PC-9 (cell line): ENCODE measurements at regions of chr6 and their contacts with region 1.

Region 1: GRCh38 chr6:137218917-137219663 is at the start of gene IFNGR1:
- DNase-seq: peak; percentile 95 to 96
- H3K4me3 ChIP-seq: peak within 1 kb of the TSS; percentile 88
- H3K27ac ChIP-seq: peak within 1 kb of the TSS; percentile 90
- H3K4me1 ChIP-seq: peaks cover 55% of the 10 kb centered on the region
- H3K27me3 ChIP-seq: no peaks in the 10 kb centered on the region
- CTCF ChIP-seq: no peak
- total RNA-seq, gene IFNGR1: 17.9 and 19.5 TPM in 2 replicates

Region 2: GRCh38 chr6:137261393-137262160 is 42.5 kb after region 1 on chr6:
- CTCF ChIA-PET with region 1: no interaction called
- POLR2A ChIA-PET with region 1: no interaction called
- intact Hi-C with region 1: loop called (anchors 1 kb)
- DNase-seq: peak in 1 of 2 experiments; percentile 96
- H3K4me3 ChIP-seq: peak overlapping the region; percentile 28
- H3K27ac ChIP-seq: peak overlapping the region; percentile 68
- H3K4me1 ChIP-seq: peaks cover 20% of the 10 kb centered on the region
- H3K27me3 ChIP-seq: peaks cover 24% of the 10 kb centered on the region
- CTCF ChIP-seq: no peak

Region 3: DNA sequence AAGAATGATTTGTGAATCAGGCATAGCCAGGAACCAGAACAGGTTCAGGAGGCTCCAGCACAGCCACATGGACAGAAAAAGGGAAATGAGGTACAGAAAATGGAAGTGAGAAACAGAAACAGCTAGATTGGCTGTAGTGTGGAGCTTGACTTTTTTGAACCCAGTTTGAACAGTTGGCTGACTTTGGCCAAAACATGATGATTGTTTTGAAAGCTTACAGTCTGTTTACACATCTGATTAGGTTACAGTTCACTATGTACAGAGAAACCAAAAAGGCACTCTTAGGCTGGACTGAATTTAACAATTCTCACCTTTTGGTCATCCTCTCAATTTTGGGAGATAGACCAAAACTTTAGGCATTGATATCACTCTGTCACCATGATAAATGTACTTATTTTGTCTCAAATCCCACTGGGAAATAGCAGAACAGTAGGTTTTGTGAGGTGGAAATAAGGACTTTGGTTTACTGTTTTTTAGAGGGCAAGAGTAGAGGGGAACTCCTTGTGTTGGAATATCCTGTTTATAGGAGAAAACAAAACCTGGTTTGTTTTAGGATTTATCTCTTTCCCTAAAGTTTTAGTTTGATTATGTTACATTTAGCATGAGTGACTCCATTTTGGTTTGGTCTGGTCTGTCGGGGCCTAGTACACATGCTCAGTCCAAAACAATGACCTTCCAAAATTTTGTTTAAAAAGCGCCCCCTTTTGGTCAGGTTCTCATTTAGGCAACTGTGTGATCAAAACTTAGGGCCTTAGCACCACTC is 152.0 kb after region 1 on chr6:
- CTCF ChIA-PET with region 1: no interaction called
- POLR2A ChIA-PET with region 1: no interaction called
- intact Hi-C with region 1: no loop called
- DNase-seq: peak in 1 of 2 experiments; percentile 11
- H3K4me3 ChIP-seq: no peak overlapping the region
- H3K27ac ChIP-seq: no peak overlapping the region
- H3K4me1 ChIP-seq: no peaks in the 10 kb centered on the region
- H3K27me3 ChIP-seq: no peaks in the 10 kb centered on the region
- CTCF ChIP-seq: peak; percentile 52; the same call in 1 of the 2 replicates

Region 4: DNA sequence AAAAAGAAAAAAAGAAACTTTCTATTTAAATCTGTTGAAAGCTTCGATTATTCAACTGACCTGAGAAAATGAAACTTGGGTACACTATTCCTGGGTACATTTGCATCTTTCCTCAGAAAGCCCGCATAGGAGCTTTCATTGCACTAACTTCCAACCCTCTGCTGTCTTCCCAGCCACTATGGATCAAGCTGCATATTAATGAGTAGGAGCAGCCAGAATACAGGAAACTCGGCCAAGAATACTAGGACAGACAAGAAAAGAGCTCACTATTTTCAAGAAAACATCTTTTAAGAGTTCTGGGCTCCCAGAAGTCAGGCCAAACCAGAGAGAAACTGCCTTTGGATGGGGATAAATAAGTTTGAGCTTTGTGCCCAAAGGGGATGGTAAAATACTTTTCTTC is 1419.5 kb after region 1 on chr6:
- CTCF ChIA-PET with region 1: no interaction called
- POLR2A ChIA-PET with region 1: no interaction called
- intact Hi-C with region 1: no loop called
- DNase-seq: no peak
- H3K4me3 ChIP-seq: no peak overlapping the region
- H3K27ac ChIP-seq: no peak overlapping the region
- H3K4me1 ChIP-seq: no peaks in the 10 kb centered on the region
- H3K27me3 ChIP-seq: no peaks in the 10 kb centered on the region
- CTCF ChIP-seq: no peak